Breast epithelium (tissue), 4 donors: ENCODE measurements at regions of chr2 and their contacts with region 1.

Region 1: DNA sequence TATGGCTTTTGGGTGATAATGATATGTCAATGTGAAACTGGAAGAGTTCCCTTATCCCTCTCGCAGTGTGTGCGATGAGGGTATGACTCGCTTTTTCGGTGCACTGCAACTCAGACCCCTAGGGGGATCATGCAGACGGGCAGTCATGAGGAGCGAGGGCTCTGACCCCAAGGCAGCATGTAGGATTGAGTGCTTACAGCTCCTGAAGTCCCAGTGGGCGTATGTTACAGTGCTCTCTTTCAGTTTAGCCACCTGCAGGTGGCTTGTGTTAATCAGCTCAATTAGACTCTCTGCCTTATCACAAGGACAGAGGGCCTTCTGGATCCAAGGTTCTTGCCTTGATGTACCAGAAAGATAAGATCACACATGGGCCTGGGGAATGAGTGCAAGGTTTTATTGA is 1269.9 kb upstream of the GYPC start:
- DNase-seq: no peak
- H3K4me3 ChIP-seq: no peak overlapping the region
- H3K27ac ChIP-seq: no peak overlapping the region
- H3K4me1 ChIP-seq: no peaks in the 10 kb centered on the region
- H3K27me3 ChIP-seq: no peaks in the 10 kb centered on the region
- CTCF ChIP-seq: no peak
- POLR2A ChIP-seq: no peak

Region 2: DNA sequence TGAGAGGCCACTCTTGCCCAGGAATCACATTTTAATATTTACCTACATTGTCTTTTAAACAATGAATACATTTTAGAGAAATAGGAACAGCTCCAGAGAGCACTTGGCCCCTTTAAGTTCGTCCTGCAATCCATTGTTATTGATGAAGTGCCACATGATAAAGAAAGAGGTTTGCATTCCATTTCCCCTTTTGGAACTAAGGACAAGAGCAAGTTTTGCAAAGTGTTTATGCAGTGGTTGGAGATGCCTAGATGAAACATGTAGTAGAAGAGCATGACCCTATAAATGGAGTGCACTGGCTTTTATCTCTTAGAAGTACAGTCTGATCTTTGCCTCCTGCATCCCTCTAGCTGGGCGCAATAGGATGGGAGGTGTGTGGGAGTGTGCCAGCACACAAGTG is 1479.7 kb before region 1 on chr2:
- intact Hi-C with region 1: loop called (anchors 10 kb)
- DNase-seq: no peak
- H3K4me3 ChIP-seq: no peak overlapping the region
- H3K27ac ChIP-seq: no peak overlapping the region
- H3K4me1 ChIP-seq: no peaks in the 10 kb centered on the region
- H3K27me3 ChIP-seq: no peaks in the 10 kb centered on the region
- CTCF ChIP-seq: no peak
- POLR2A ChIP-seq: no peak

Region 3: DNA sequence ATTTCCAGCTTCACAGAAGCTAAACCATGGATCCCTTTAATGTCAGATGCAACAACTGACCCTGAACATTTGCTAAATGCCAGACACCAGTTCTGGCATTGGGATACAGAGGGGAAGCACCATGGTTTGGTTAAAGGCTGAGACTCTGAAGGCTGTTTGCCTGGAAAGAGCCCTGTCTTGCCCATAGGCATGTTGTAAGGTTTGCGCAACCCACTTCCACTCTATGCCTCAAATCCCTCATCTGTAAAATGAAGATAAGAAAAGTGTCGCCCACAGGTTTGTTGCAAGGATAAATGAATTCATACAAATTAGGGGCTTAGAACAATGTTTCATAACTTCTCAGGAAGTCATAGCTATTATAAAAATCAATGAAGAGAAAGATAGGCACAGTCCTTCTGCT is 889.0 kb after region 1 on chr2:
- intact Hi-C with region 1: no loop called
- DNase-seq: no peak
- H3K4me3 ChIP-seq: no peak overlapping the region
- H3K27ac ChIP-seq: no peak overlapping the region
- H3K4me1 ChIP-seq: no peaks in the 10 kb centered on the region
- H3K27me3 ChIP-seq: no peaks in the 10 kb centered on the region
- CTCF ChIP-seq: no peak
- POLR2A ChIP-seq: no peak